Activated naive CD4-positive, alpha-beta T cell treated with anti-CD3 and anti-CD28 coated beads for 36 hours (primary cell): ENCODE measurements at regions of chr17 and their contacts with region 1.

Region 1: GRCh38 chr17:49230636-49231562 is at the start of gene PHOSPHO1:
- DNase-seq: peak; percentile 82
- H3K4me3 Mint-ChIP-seq: peak within 1 kb of the TSS; percentile 75
- H3K27ac Mint-ChIP-seq: no peak within 1 kb of the TSS
- H3K4me1 Mint-ChIP-seq: peaks cover 8% of the 10 kb centered on the region
- H3K27me3 Mint-ChIP-seq: peaks cover 16% of the 10 kb centered on the region
- total RNA-seq, gene PHOSPHO1: not detected

Region 2: GRCh38 chr17:49146620-49147306 is 84.1 kb before region 1 on chr17:
- CTCF ChIA-PET with region 1: no interaction called
- intact Hi-C with region 1: no loop called
- DNase-seq: no peak
- H3K4me3 Mint-ChIP-seq: no peak overlapping the region
- H3K27ac Mint-ChIP-seq: no peak overlapping the region
- H3K4me1 Mint-ChIP-seq: no peaks in the 10 kb centered on the region
- H3K27me3 Mint-ChIP-seq: peaks cover 15% of the 10 kb centered on the region

Region 3: GRCh38 chr17:49210158-49211029 is 20.5 kb before region 1 on chr17 and contains the starts of genes ABI3 and GNGT2:
- CTCF ChIA-PET with region 1: interaction called, 13 read pairs
- intact Hi-C with region 1: loop called (anchors 2 kb)
- DNase-seq: peak; percentile 88
- H3K4me3 Mint-ChIP-seq: peak within 1 kb of the TSS; percentile 85
- H3K27ac Mint-ChIP-seq: peak within 1 kb of the TSS; percentile 94
- H3K4me1 Mint-ChIP-seq: peaks cover 58% of the 10 kb centered on the region
- H3K27me3 Mint-ChIP-seq: no peaks in the 10 kb centered on the region
- total RNA-seq, gene ABI3: 18.7 to 18.9 TPM
- total RNA-seq, gene GNGT2: 40.3 to 41.3 TPM

Region 4: GRCh38 chr17:49249292-49249794 is 18.4 kb after region 1 on chr17:
- CTCF ChIA-PET with region 1: no interaction called
- intact Hi-C with region 1: no loop called
- DNase-seq: no peak
- H3K4me3 Mint-ChIP-seq: no peak overlapping the region
- H3K27ac Mint-ChIP-seq: no peak overlapping the region
- H3K4me1 Mint-ChIP-seq: no peaks in the 10 kb centered on the region
- H3K27me3 Mint-ChIP-seq: peaks cover 7% of the 10 kb centered on the region

Region 5: GRCh38 chr17:49290690-49291359 is 59.9 kb after region 1 on chr17:
- CTCF ChIA-PET with region 1: interaction called, 9 read pairs
- intact Hi-C with region 1: loop called (anchors 2 kb)
- DNase-seq: peak; percentile 40
- H3K4me3 Mint-ChIP-seq: no peak overlapping the region
- H3K27ac Mint-ChIP-seq: no peak overlapping the region
- H3K4me1 Mint-ChIP-seq: peaks cover 6% of the 10 kb centered on the region
- H3K27me3 Mint-ChIP-seq: no peaks in the 10 kb centered on the region